PC-3 (cell line): ENCODE measurements at regions of chr3 and their contacts with region 1.

Region 1: DNA sequence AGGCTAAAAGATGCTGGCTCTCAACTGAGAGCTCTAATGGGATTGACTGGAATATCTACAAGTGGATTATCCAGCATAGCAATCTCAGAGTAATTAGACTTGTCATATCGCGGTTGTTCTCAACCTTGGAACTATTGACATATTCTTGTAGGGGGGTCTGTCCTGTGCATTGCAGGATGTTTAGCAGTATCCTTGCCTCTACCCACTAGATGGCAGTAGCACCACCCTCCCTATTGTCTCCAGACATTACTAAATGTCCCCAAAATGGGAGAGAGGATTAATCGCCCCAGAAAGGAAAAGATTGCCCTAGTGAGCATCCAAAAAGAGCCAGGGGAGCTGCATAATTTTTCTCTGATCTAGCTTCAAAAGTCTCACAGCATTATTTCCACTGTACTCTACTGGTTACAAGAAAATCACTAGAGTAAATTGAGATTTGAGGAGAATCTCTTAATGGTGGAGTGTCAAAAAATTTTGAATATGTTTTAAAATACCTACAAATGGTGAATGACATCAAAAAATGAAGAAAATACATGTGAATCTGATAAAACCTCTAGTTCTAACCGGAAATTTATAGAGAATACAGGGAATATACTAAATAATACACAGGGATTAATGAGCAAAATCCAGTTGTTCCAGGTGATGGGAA is 388.2 kb upstream of the AGTR1 start:
- DNase-seq: peak; percentile 57
- ATAC-seq: peak; percentile 89
- H3K4me3 ChIP-seq: no peak overlapping the region
- H3K27ac ChIP-seq: no peak overlapping the region
- H3K4me1 ChIP-seq: no peaks in the 10 kb centered on the region
- H3K27me3 ChIP-seq: no peaks in the 10 kb centered on the region
- CTCF ChIP-seq: peak; percentile 87

Region 2: GRCh38 chr3:148255981-148256969 is 53.2 kb before region 1 on chr3:
- CTCF ChIA-PET with region 1: no interaction called
- POLR2A ChIA-PET with region 1: no interaction called
- intact Hi-C with region 1: no loop called
- DNase-seq: no peak
- ATAC-seq: no peak
- H3K4me3 ChIP-seq: no peak overlapping the region
- H3K27ac ChIP-seq: no peak overlapping the region
- H3K4me1 ChIP-seq: no peaks in the 10 kb centered on the region
- H3K27me3 ChIP-seq: no peaks in the 10 kb centered on the region
- CTCF ChIP-seq: no peak

Region 3: GRCh38 chr3:148366743-148367410 is 57.4 kb after region 1 on chr3:
- CTCF ChIA-PET with region 1: no interaction called
- POLR2A ChIA-PET with region 1: no interaction called
- intact Hi-C with region 1: loop called (anchors 1 kb)
- DNase-seq: peak; percentile 49
- ATAC-seq: peak; percentile 75
- H3K4me3 ChIP-seq: no peak overlapping the region
- H3K27ac ChIP-seq: no peak overlapping the region
- H3K4me1 ChIP-seq: 0 out of 2 replicates have a peak, but pooled peaks cover 4% of the 10 kb centered on the region
- H3K27me3 ChIP-seq: no peaks in the 10 kb centered on the region
- CTCF ChIP-seq: peak; percentile 58

Region 4: DNA sequence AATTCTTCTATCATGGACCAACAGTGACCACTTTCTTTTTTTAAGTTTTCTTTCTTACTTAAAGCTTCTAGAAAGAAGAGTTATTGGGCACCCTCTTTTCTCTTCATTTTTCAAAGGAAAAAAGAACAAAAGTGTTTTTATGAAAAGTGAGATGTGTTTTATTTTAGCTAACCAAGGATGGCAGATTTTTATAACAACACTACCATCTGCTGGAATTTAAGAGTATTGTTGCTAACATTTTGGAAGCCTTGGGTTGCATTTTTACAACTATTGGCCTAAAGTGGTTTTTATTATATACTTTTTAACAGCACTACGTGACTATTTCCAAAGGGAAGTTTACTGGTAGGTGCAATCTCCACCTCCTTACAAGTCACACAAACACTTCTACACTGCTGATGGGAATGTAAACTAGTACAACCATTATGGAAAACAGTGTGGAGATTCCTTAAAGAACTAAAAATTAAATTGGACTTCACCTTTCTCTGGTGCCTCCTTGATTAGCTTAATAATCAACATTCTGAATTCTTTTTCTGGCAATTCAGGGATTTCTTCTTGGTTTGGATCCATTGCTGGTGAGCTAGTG is 150.5 kb after region 1 on chr3:
- CTCF ChIA-PET with region 1: no interaction called
- POLR2A ChIA-PET with region 1: no interaction called
- intact Hi-C with region 1: loop called (anchors 5 kb)
- DNase-seq: peak; percentile 16
- ATAC-seq: no peak
- H3K4me3 ChIP-seq: no peak overlapping the region
- H3K27ac ChIP-seq: no peak overlapping the region
- H3K4me1 ChIP-seq: no peaks in the 10 kb centered on the region
- H3K27me3 ChIP-seq: no peaks in the 10 kb centered on the region
- CTCF ChIP-seq: peak; percentile 62